ENCODE measurements at regions of chr6 and their contacts with region 1.

Region 1: GRCh38 chr6:42901536-42901957 is 14.3 kb upstream of the PTCRA start:
- DNase-seq: peak; percentile 40 to 92
- ATAC-seq: peak; percentile 96 to 99 (median 99)
- H3K4me3 ChIP-seq: no peak overlapping the region
- H3K4me3 Mint-ChIP-seq: no peak overlapping the region
- H3K27ac ChIP-seq: no peak overlapping the region
- H3K27ac Mint-ChIP-seq: no peak overlapping the region
- H3K4me1 ChIP-seq: peaks cover 6% of the 10 kb centered on the region
- H3K4me1 Mint-ChIP-seq: peaks cover 8 to 12% of the 10 kb centered on the region in 2 donors
- H3K27me3 ChIP-seq: no peaks in the 10 kb centered on the region
- H3K27me3 Mint-ChIP-seq: no peaks in the 10 kb centered on the region
- CTCF ChIP-seq: peak; percentile 83

Region 2: GRCh38 chr6:42661540-42662153 is 239.9 kb before region 1 on chr6:
- intact Hi-C with region 1: loop called (anchors 1 kb)
- DNase-seq: peak; percentile 80 to 89
- ATAC-seq: peak; percentile 92 to 100 (median 96)
- H3K4me3 ChIP-seq: no peak overlapping the region
- H3K4me3 Mint-ChIP-seq: no peak overlapping the region
- H3K27ac ChIP-seq: no peak overlapping the region
- H3K27ac Mint-ChIP-seq: peak overlapping the region in 1 of 2 donors; percentile 17
- H3K4me1 ChIP-seq: no peaks in the 10 kb centered on the region
- H3K4me1 Mint-ChIP-seq: no peaks in the 10 kb centered on the region
- H3K27me3 ChIP-seq: no peaks in the 10 kb centered on the region
- H3K27me3 Mint-ChIP-seq: no peaks in the 10 kb centered on the region
- CTCF ChIP-seq: peak; percentile 91

Region 3: GRCh38 chr6:43143235-43144124 is 241.9 kb after region 1 on chr6:
- intact Hi-C with region 1: loop called (anchors 1 kb)
- DNase-seq: peak; percentile 74 to 89
- ATAC-seq: peak; percentile 85 to 98 (median 86)
- H3K4me3 ChIP-seq: no peak overlapping the region
- H3K4me3 Mint-ChIP-seq: no peak overlapping the region
- H3K27ac ChIP-seq: no peak overlapping the region
- H3K27ac Mint-ChIP-seq: peak overlapping the region in 1 of 2 donors; percentile 53
- H3K4me1 ChIP-seq: peaks cover 19% of the 10 kb centered on the region
- H3K4me1 Mint-ChIP-seq: peaks cover 0 to 20% of the 10 kb centered on the region in 2 donors
- H3K27me3 ChIP-seq: no peaks in the 10 kb centered on the region
- H3K27me3 Mint-ChIP-seq: no peaks in the 10 kb centered on the region
- CTCF ChIP-seq: peak; percentile 91